Activated B cell treated with CpG ODN at 0.5 μM for 24 hours (primary cell): ENCODE measurements at regions of chr2 and their contacts with region 1.

Region 1: DNA sequence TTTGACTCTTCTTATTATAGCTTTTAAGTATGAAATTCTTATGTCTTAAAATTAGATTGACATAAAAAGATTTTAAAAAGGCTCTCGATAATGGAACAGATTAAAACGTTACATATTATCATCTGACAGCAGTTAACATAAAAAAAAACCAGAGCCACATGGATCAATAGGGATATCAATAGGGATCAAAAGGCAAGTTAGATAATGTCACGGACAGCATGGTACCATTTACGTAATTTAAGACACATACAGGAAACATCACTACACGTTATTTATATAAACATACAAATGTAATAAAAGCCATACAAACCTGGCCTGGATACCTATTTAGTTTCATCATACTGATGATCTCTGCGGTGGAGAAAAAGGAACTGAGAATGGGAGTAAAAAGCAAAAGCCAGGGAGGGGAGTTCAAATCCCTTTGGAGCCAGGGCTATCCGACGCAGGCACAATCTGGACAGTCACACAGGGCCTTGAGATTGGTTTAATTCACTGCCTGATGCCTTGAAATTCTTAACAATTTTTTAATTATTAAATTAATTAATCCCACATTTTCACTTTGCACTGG is 227.2 kb downstream of the AFF3 start:
- DNase-seq: no peak
- ATAC-seq: no peak
- H3K4me3 Mint-ChIP-seq: no peak overlapping the region
- H3K27ac Mint-ChIP-seq: peak overlapping the region; percentile 4
- H3K4me1 Mint-ChIP-seq: peaks cover 25% of the 10 kb centered on the region
- H3K27me3 Mint-ChIP-seq: no peaks in the 10 kb centered on the region
- CTCF ChIP-seq: no peak

Region 2: DNA sequence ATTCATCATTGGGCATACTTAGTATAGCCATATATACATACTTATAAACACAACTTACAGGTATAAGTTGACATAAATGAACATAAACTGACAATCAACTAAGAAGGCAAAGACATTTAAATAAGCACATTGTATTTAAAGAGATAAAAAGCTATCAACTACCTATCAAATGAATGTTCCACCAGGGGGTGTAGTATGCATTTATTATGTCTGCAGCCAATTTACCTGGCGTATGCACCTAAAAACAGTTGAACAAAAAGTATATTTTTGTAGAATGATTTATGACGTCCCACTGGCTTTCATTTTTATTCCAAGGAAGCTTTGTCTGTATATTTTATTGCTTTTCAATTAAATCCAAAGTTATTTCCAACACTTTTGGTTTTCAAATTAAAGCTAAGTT is 96.3 kb before region 1 on chr2:
- CTCF ChIA-PET with region 1: no interaction called
- POLR2A ChIA-PET with region 1: no interaction called
- intact Hi-C with region 1: no loop called
- DNase-seq: no peak
- ATAC-seq: no peak
- H3K4me3 Mint-ChIP-seq: no peak overlapping the region
- H3K27ac Mint-ChIP-seq: no peak overlapping the region
- H3K4me1 Mint-ChIP-seq: no peaks in the 10 kb centered on the region
- H3K27me3 Mint-ChIP-seq: no peaks in the 10 kb centered on the region
- CTCF ChIP-seq: no peak

Region 3: DNA sequence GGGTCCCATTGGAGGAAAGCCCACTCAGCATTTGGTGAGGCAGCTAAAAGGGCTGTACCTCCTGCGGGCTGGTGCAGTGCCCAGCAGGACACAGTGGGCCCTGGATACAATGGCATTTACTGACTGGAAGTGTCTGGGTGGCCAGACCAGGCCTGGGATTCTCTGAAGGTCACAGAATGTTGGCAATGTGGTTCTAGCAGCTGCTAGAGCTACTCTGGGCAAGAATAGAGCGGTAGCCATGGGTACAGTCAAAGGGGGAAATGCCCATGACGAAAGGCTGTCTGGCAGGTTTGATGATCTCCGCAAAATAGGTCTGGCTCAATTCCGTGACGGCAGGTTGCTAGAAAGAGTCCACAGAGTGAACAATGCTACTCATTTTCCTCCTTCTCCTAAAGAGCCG is 14.6 kb before region 1 on chr2:
- CTCF ChIA-PET with region 1: interaction called, 3 read pairs
- POLR2A ChIA-PET with region 1: no interaction called
- intact Hi-C with region 1: loop called (anchors 2 kb)
- DNase-seq: no peak
- ATAC-seq: no peak
- H3K4me3 Mint-ChIP-seq: no peak overlapping the region
- H3K27ac Mint-ChIP-seq: no peak overlapping the region
- H3K4me1 Mint-ChIP-seq: peaks cover 13% of the 10 kb centered on the region
- H3K27me3 Mint-ChIP-seq: no peaks in the 10 kb centered on the region
- CTCF ChIP-seq: no peak